Posterior vena cava (tissue), 2 donors: ENCODE measurements at regions of chr11 and their contacts with region 1.

Region 1: GRCh38 chr11:36564376-36565030 is 3.3 kb upstream of the RAG1 start:
- DNase-seq: no peak

Region 2: DNA sequence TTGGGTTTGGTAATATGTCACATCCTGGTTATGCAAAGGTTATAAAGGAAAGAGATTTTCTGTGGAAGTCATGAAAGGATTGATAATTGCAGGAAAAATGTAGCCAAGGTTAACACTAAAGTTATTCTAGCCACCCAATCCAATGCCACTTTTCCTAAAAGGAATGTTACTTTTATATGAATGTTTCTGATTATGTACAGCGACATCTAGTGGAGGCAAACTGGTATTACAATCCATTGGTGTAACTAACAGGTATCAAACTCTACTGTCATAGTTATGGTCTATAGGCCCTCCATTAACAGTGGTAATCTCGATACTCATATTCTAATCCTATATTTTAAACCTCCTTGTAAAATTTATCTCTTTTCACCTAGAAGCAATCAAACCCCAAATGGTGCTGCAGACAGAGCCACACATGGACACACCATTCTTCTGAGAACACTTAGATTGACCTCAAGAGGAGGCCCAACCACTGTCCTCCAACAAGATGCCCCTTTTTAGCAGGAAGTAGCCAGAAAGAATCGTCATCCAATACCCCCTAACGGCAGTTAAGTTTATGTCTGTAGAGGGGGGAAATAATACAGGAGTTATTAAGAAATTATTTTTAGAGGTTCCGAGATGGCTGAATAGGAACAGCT is 108.4 kb after region 1 on chr11:
- intact Hi-C with region 1: loop called (anchors 10 kb)
- DNase-seq: no peak